Left cardiac atrium (tissue), 4 donors: ENCODE measurements at regions of chr3 and their contacts with region 1.

Region 1: GRCh38 chr3:51371943-51372557 is 13.0 kb upstream of the MANF start:
- DNase-seq: no peak
- ATAC-seq: peak in 1 of 2 donors; percentile 65

Region 2: DNA sequence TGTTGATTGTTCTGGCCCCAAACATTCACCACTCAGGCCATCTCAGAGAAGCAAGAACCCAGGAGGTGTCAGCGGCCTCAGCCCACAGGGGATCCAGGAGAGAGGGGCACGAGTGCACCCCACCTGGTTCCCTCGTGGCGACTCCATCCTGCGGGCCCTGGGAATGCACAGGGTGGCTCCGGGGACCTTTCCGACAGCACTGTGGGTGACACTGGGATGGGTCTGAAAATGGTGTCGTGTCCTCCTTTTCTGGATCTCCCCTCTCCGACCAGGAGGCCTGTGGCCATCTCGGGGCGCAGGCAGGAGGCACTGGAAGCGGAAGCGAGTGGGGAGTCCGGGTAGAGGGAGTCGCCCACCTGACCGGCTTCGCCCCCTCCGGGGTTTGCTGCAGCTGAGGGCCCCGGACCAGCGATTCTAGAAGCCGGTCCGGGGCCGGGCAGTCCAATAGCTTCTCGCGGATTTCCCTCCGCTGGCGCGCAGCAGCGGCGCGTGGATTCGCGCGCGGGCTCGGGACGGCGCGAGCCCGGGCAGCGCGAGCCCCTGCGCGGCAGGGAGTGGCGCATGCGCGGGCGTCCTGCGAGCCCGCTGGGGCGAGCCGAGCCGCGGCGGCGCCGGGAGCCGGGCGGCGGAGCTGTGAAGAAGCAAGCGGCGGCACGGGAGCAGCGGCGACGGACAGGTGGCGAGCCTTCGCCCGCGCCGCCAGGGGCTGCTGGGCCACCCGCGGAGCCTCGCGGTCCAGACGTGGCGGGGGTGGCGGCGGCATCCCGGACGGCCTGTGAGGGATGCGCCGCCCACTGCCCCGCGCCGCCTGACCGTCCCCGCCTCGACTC is 697.5 kb before region 1 on chr3 and contains the start of gene DOCK3:
- intact Hi-C with region 1: loop called in 1 of 2 experiments (anchors 10 kb)
- DNase-seq: peak; percentile 73
- ATAC-seq: peak; percentile 94 to 95
- total RNA-seq, gene DOCK3: 2.8 to 3.8 TPM

Region 3: GRCh38 chr3:51099794-51100535 is 272.1 kb before region 1 on chr3:
- intact Hi-C with region 1: loop called in 1 of 2 experiments (anchors 5 kb)
- DNase-seq: peak; percentile 34
- ATAC-seq: peak; percentile 61 to 78

Region 4: DNA sequence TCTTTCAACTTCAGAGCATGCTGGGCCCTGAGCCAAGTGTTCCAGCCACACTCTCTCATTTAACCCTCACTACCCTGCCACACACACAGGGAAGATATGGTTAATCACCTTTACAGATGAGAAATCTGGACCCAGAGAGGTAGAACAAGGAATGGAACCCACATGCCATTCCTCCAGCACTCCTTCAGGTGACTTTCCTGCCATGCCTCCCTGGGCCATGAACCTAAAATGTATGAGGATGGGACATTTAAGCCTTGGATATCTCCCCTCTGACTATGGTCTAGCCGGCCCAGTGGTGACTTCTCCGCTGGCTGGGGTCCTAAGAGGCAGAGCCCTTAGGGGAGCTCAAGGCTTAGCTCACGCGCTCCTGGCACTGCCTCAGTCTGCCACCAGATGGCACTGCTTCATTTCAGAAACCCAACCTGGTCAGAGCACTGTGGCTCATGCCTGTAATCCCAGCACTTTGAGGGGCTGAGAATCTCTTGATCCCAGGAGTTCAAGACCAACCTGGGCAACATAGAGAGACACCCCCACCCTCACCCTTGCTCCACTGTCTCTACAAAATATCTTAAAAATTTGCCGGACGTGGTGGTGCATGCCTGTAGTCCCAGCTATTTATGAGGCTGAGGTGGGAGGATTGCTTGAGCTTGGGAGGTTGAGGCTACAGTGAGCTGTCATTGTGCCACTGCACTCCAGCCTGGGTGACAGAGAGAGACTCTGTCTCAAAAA is 129.9 kb after region 1 on chr3:
- intact Hi-C with region 1: no loop called
- DNase-seq: peak; percentile 82
- ATAC-seq: peak in 1 of 2 donors; percentile 9

Region 5: DNA sequence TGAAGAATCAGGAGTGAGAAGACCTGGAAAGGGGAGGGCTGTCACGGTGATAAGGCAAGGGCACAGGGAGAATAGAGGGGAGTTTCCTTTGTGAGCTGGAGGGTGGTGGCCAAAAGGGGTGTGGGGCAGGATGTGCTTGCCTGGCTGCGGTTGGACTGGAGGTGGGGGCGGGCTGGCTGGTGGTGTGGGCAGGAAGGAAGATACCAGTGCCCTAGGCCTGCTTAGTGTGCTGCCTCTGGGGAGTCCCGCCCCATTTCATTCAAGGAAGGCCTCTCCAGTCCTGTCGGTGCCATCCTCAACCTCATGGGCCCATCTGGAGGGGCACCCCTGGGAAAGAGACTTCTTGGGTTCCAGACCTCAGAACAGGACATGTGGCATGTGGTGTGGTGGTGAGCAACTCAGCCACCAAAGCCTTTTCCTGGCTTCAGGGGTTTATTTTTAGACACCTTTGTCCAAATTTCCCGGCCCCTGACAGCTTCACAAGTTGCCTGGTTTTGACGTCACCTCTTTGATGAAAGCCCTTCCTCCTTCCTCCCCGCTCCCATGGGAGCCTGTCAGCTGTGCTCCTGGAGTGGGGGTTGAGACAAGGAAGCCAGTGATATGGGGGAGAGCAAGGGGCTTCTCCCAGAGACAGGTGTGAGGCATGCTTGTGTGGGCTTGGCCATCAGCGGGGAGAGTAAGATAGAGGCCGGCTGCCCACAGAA is 314.6 kb after region 1 on chr3:
- intact Hi-C with region 1: no loop called
- DNase-seq: peak; percentile 76
- ATAC-seq: peak; percentile 59 to 70